Activated CD4-positive, alpha-beta memory T cell treated with anti-CD3 and anti-CD28 coated beads, Interleukin-2, amount 10 ng/mL, durations not matched to agents 7 days and 5 days (primary cell): ENCODE measurements at regions of chr12 and their contacts with region 1.

Region 1: DNA sequence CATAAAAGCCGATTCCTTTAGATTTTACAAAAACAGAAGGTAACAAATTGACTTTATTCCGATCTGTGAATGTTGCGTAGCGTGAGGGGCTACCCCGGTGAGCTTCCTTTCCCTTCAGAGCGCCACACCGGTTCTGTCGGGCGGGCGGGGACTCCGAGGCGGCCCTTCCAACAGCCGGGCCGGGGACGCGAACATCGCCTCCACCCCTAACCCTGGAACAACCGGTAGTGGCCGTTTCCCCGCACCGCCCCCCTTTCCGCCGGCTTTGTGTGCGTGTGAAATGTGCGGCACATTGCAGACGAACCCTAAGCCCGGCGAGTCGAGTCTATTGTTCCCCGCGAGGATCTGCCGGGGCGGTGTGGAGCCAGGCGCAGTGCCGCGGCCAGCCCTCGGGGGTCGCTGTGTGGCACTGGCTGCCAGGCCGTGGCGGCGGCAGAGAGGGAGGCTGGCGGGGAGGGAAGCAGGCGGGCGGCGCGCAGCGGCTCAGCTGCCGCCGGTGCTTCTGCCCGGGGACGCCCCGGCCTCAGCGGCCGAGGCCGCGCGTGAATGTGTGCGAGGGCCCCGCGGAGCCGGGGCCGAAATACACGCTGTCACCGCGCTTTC is 775 bp upstream of the ARID2 start:
- DNase-seq: peak; percentile 98
- H3K4me3 Mint-ChIP-seq: peak overlapping the region; percentile 93
- H3K27ac Mint-ChIP-seq: peak overlapping the region; percentile 100
- H3K4me1 Mint-ChIP-seq: peaks cover 23% of the 10 kb centered on the region
- H3K27me3 Mint-ChIP-seq: no peaks in the 10 kb centered on the region

Region 2: GRCh38 chr12:45509187-45509586 is 219.5 kb before region 1 on chr12:
- CTCF ChIA-PET with region 1: no interaction called
- POLR2A ChIA-PET with region 1: no interaction called
- DNase-seq: no peak
- H3K4me3 Mint-ChIP-seq: no peak overlapping the region
- H3K27ac Mint-ChIP-seq: no peak overlapping the region
- H3K4me1 Mint-ChIP-seq: no peaks in the 10 kb centered on the region
- H3K27me3 Mint-ChIP-seq: no peaks in the 10 kb centered on the region

Region 3: GRCh38 chr12:45532113-45532512 is 196.6 kb before region 1 on chr12:
- CTCF ChIA-PET with region 1: no interaction called
- POLR2A ChIA-PET with region 1: no interaction called
- DNase-seq: no peak
- H3K4me3 Mint-ChIP-seq: no peak overlapping the region
- H3K27ac Mint-ChIP-seq: no peak overlapping the region
- H3K4me1 Mint-ChIP-seq: no peaks in the 10 kb centered on the region
- H3K27me3 Mint-ChIP-seq: peaks cover 18% of the 10 kb centered on the region

Region 4: DNA sequence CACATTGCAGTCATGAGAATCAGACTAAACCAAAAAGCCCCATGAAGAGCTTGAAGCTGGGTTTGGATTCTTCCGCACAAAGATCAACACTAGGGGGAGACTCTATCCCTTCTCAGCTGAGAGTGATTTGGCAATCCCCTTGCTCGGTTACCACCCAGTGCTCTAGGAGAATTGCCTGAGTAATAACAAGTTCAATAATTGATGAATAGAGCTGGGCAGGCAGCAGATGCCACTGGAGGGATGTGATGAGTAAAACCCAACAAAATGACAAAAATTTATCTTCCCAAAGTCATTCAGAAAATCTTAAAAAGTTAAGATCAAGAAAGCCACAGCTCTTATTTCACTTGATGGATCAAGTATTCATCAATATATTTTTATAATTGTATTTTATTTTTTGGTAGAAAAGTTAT is 184.8 kb before region 1 on chr12:
- CTCF ChIA-PET with region 1: interaction called, 103 read pairs
- POLR2A ChIA-PET with region 1: interaction called, 46 read pairs
- DNase-seq: peak; percentile 56
- H3K4me3 Mint-ChIP-seq: no peak overlapping the region
- H3K27ac Mint-ChIP-seq: no peak overlapping the region
- H3K4me1 Mint-ChIP-seq: peaks cover 4% of the 10 kb centered on the region
- H3K27me3 Mint-ChIP-seq: peaks cover 3% of the 10 kb centered on the region

Region 5: DNA sequence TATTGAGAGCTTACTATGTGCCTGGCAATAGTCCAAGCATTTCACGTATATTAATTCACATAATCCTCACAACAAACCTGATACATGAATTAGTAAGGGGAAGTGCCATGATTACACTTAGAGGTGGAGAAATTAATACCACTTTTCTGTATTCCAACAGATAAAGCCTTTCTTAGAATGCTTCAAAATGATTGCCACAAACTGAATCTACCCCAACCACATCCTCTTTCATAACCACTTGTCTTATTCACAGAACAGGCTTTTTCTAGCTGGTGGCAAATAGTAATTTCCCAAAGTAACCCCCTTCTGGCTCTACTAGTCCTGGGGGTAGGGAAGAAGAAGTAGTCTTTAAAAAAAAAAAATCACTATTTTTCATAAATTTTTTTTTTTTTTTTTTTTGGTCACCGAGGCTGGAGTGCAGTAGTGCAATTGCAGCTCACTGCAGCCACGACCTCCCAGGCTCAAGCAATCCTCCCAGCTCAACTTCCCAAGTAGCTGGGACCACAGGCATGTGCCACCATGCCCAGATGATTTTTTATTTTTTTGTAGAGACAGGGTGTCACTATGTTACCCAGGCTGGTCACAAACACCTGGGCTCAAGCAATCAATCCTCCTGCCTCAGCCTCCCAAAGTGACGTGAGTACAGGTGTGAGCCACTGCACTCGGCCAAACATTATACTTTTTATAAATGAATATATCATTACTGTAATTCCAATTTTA is 58.2 kb before region 1 on chr12:
- CTCF ChIA-PET with region 1: interaction called, 49 read pairs
- POLR2A ChIA-PET with region 1: interaction called, 172 read pairs
- DNase-seq: no peak
- H3K4me3 Mint-ChIP-seq: peak overlapping the region; percentile 19
- H3K27ac Mint-ChIP-seq: peak overlapping the region; percentile 55
- H3K4me1 Mint-ChIP-seq: peaks cover 39% of the 10 kb centered on the region
- H3K27me3 Mint-ChIP-seq: peaks cover 14% of the 10 kb centered on the region

Region 6: DNA sequence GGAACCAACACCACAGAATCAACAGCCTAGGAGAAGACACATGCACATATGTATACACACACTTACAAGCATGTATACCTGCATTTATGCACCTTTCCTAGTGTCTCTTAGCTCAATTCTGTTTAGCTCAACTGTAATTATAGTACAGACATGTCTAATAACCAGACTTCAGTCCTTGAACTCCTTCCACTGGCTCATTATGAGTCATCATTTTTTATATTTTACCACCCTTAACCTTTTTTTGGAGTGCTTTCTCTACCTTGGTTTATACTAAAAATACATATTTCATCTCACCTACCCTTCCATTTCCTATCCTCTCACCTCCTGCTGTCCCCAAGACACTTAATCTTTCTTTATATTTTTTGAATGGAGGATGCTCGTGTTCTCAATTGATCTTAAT is 111.2 kb after region 1 on chr12:
- CTCF ChIA-PET with region 1: no interaction called
- POLR2A ChIA-PET with region 1: no interaction called
- DNase-seq: no peak
- H3K4me3 Mint-ChIP-seq: no peak overlapping the region
- H3K27ac Mint-ChIP-seq: no peak overlapping the region
- H3K4me1 Mint-ChIP-seq: no peaks in the 10 kb centered on the region
- H3K27me3 Mint-ChIP-seq: no peaks in the 10 kb centered on the region

Region 7: GRCh38 chr12:45878630-45879255 is 150.0 kb after region 1 on chr12:
- CTCF ChIA-PET with region 1: interaction called, 3 read pairs
- POLR2A ChIA-PET with region 1: interaction called, 13 read pairs
- DNase-seq: peak; percentile 62
- H3K4me3 Mint-ChIP-seq: peak overlapping the region; percentile 61
- H3K27ac Mint-ChIP-seq: peak overlapping the region; percentile 89
- H3K4me1 Mint-ChIP-seq: peaks cover 56% of the 10 kb centered on the region
- H3K27me3 Mint-ChIP-seq: no peaks in the 10 kb centered on the region

Region 8: GRCh38 chr12:45974171-45974719 is 245.5 kb after region 1 on chr12:
- CTCF ChIA-PET with region 1: no interaction called
- POLR2A ChIA-PET with region 1: no interaction called
- DNase-seq: no peak
- H3K4me3 Mint-ChIP-seq: no peak overlapping the region
- H3K27ac Mint-ChIP-seq: no peak overlapping the region
- H3K4me1 Mint-ChIP-seq: peaks cover 66% of the 10 kb centered on the region
- H3K27me3 Mint-ChIP-seq: no peaks in the 10 kb centered on the region